ENCODE measurements at regions of chr4 and their contacts with region 1.

Region 1: DNA sequence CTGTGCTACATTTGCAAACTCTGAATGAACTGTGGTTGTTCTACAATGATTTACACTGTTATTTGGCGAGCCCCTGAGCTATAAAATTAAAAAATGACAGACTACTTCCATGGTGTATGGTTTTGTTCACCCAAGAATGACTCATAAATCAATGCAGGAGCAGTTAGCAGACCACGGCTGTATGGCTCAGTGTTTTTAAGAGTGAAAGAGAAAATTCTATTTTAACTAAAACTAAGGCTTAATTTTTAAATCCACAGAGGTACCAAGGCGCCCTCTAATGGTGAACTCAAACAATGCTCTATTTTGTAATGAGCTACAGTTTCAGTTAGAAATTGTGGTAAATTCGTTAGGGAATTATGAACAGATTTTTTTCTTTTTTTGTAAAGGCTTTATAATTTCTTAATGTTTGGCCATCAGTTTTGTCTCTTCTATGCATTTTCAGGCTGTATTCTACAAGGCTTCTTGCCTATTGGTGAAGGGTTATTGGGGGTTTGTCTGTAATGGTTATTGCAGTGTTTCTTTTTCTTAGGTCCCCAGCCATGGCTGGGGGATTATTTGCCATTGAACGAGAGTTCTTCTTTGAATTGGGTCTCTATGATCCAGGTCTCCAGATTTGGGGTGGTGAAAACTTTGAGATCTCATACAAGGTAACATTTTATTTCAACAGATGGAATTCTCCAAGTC is 32.5 kb downstream of the HMGB2 start:
- DNase-seq: no peak
- ATAC-seq: peak; percentile 58
- H3K4me3 ChIP-seq: no peak overlapping the region
- H3K27ac ChIP-seq: no peak overlapping the region
- H3K4me1 ChIP-seq: no peaks in the 10 kb centered on the region
- H3K27me3 ChIP-seq: no peaks in the 10 kb centered on the region
- CTCF ChIP-seq: peak; percentile 58 to 70 (median 60)
- EP300 ChIP-seq: no peak
- POLR2A ChIP-seq: no peak
- RAD21 ChIP-seq: peak; percentile 75

Region 2: DNA sequence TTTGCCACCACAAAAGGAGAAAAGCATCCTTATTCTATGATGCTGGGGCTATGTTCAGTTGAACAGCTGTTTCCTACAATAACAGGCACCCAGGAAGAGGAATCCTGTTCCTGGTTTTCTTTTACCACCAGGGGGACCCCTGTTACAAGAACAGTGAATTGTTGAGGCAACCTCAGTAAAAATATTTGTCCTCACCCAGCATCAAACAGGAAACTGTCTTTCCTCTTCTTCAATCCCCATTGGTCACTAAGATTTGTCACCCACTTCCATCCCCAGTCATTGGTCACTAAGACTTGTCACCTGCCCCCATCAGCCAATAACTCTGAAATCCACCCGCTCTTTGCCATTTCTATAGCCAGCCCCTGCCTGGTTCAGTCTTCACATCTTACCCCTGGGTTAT is 276.5 kb before region 1 on chr4:
- CTCF ChIA-PET with region 1: interaction called, 48 read pairs
- POLR2A ChIA-PET with region 1: no interaction called
- RAD21 ChIA-PET with region 1: interaction called, 31 read pairs
- SMC1A ChIA-PET with region 1: interaction called, 27 read pairs
- in situ Hi-C with region 1: no loop called
- intact Hi-C with region 1: no loop called
- DNase-seq: peak; percentile 16
- ATAC-seq: peak; percentile 95
- H3K4me3 ChIP-seq: no peak overlapping the region
- H3K27ac ChIP-seq: no peak overlapping the region
- H3K4me1 ChIP-seq: no peaks in the 10 kb centered on the region
- H3K27me3 ChIP-seq: no peaks in the 10 kb centered on the region; a peak in 1 of 4 replicates
- CTCF ChIP-seq: peak; percentile 54 to 63 (median 58); a peak in 5 of 6 replicates
- EP300 ChIP-seq: no peak
- POLR2A ChIP-seq: no peak
- RAD21 ChIP-seq: peak; percentile 91

Region 3: DNA sequence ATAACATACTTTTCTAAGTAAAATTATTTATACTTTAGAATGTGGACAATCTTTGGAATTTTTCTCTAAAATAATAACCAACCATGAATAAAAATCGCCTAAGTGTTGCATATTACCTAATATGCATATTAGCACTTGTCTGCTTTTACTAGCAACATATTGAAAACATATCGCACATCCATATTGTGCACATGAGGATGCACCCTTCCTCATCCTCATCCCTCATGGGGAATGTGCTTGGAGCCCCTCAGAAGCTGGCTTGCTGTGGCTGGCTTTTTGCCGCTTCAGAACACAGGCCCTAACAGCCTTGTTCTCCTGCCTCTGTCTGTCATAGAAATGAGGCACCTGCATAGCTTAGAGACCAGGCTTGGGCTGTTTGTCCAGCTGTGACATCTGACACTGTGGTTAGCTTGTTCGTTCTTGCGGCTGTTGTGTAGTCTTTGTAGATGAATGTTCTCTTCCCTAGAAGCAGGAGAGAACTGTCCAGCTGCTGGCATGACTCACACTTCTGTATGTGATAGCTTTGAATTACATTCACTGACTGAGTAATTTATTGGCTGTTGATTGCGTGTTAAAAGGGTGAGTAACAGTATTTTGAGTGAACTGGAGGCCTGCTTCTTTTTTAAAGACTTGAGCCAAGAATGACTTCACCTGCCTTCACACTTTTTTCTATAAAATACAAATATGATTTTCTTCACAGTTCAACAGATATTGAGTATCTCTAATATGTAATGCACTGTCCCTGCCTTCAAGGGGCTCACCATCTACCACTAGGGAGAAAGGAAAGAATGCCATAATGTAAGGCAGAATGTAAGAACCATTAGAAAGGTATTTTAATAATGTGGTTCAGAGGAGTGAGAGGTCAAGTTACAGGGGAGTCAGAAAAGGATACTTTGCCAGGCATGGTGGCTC is 49.4 kb before region 1 on chr4:
- CTCF ChIA-PET with region 1: interaction called, 33 read pairs
- POLR2A ChIA-PET with region 1: interaction called, 3 read pairs
- RAD21 ChIA-PET with region 1: interaction called, 22 read pairs
- SMC1A ChIA-PET with region 1: interaction called, 17 read pairs
- in situ Hi-C with region 1: no loop called
- intact Hi-C with region 1: no loop called
- DNase-seq: peak; percentile 68
- ATAC-seq: peak; percentile 51
- H3K4me3 ChIP-seq: no peak overlapping the region
- H3K27ac ChIP-seq: peak overlapping the region; percentile 61
- H3K4me1 ChIP-seq: peaks cover 26% of the 10 kb centered on the region
- H3K27me3 ChIP-seq: no peaks in the 10 kb centered on the region
- CTCF ChIP-seq: no peak
- EP300 ChIP-seq: no peak; a peak in 1 of 4 replicates
- POLR2A ChIP-seq: no peak
- RAD21 ChIP-seq: peak; percentile 14; the same call in 1 of the 2 replicates

Region 4: DNA sequence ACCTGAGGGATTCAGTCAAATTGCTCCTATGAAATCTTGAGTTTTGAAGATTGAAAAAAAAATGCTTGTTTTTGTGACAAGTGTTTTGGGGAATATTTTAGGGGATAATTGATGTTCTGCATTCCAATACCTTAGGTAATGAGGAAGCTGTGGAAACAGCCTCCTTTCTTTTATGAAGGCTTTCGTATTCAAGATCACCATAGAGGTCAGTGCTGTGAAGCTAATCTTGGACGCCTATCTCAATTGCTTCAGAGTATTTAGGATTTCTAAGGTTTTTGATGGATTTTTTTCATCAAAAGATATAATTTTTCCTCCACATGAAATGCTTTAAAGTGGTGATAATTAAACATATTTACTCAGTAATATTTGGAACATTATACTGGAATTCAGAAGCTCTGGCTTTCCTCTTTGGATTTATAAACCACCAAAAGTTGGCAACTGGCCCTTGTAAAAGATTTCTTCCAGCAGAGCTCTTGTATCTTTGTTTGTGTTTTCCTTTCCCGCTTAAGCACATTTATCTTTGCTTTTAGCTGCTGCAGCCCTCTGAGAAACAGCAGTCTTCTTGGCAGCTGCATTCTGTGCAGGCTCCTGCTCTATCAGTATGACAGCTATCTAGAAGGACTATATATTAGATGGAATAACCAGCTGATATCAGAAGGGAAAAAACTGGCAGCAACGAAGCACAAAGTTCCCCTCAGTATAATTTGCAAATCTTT is 31.2 kb before region 1 on chr4:
- CTCF ChIA-PET with region 1: interaction called, 66 read pairs
- POLR2A ChIA-PET with region 1: no interaction called
- RAD21 ChIA-PET with region 1: interaction called, 9 read pairs
- SMC1A ChIA-PET with region 1: interaction called, 6 read pairs
- in situ Hi-C with region 1: no loop called
- intact Hi-C with region 1: no loop called
- DNase-seq: no peak
- ATAC-seq: no peak
- H3K4me3 ChIP-seq: no peak overlapping the region
- H3K27ac ChIP-seq: no peak overlapping the region
- H3K4me1 ChIP-seq: no peaks in the 10 kb centered on the region
- H3K27me3 ChIP-seq: no peaks in the 10 kb centered on the region
- CTCF ChIP-seq: no peak
- EP300 ChIP-seq: no peak
- POLR2A ChIP-seq: no peak
- RAD21 ChIP-seq: no peak

Region 5: GRCh38 chr4:173318648-173319211 is 17.1 kb after region 1 on chr4:
- CTCF ChIA-PET with region 1: interaction called, 53 read pairs
- POLR2A ChIA-PET with region 1: no interaction called
- RAD21 ChIA-PET with region 1: interaction called, 6 read pairs
- SMC1A ChIA-PET with region 1: interaction called, 13 read pairs
- in situ Hi-C with region 1: no loop called
- intact Hi-C with region 1: no loop called
- DNase-seq: no peak
- ATAC-seq: peak; percentile 51; the same call in 2 of the 3 replicates
- H3K4me3 ChIP-seq: no peak overlapping the region
- H3K27ac ChIP-seq: no peak overlapping the region
- H3K4me1 ChIP-seq: no peaks in the 10 kb centered on the region; the same call in 1 of the 2 replicates
- H3K27me3 ChIP-seq: no peaks in the 10 kb centered on the region
- CTCF ChIP-seq: peak in 1 of 3 experiments; percentile 14; a peak in 3 of 6 replicates
- EP300 ChIP-seq: no peak
- POLR2A ChIP-seq: no peak
- RAD21 ChIP-seq: peak; percentile 45

Region 6: DNA sequence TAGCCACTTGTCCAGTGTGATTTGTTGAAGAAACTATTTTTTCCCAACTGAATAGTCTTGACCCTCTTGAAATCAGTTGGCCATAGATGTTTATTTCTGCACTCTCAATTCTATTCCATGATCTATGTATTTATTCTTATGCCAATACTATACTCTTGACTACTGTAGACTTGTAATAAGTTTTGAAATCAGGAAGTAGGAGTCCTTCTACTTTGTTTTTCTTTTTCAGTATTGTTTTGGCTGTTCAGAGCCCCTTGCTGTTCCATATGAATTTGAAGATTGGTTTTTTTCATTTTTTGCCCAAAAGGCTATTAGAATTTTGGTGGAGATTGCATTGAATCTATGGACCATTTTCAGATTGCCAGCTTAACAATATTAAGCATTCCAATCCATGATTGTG is 79.3 kb after region 1 on chr4:
- CTCF ChIA-PET with region 1: interaction called, 10 read pairs
- POLR2A ChIA-PET with region 1: no interaction called
- RAD21 ChIA-PET with region 1: interaction called, 6 read pairs
- SMC1A ChIA-PET with region 1: interaction called, 3 read pairs
- in situ Hi-C with region 1: no loop called
- intact Hi-C with region 1: no loop called
- DNase-seq: no peak
- ATAC-seq: peak; percentile 57
- H3K4me3 ChIP-seq: no peak overlapping the region
- H3K27ac ChIP-seq: no peak overlapping the region
- H3K4me1 ChIP-seq: no peaks in the 10 kb centered on the region
- H3K27me3 ChIP-seq: no peaks in the 10 kb centered on the region
- CTCF ChIP-seq: no peak
- EP300 ChIP-seq: no peak
- POLR2A ChIP-seq: no peak
- RAD21 ChIP-seq: no peak

Region 7: GRCh38 chr4:173464481-173464880 is 162.8 kb after region 1 on chr4:
- CTCF ChIA-PET with region 1: no interaction called
- POLR2A ChIA-PET with region 1: no interaction called
- RAD21 ChIA-PET with region 1: no interaction called
- SMC1A ChIA-PET with region 1: no interaction called
- in situ Hi-C with region 1: no loop called
- intact Hi-C with region 1: no loop called
- DNase-seq: no peak
- ATAC-seq: no peak
- H3K4me3 ChIP-seq: no peak overlapping the region
- H3K27ac ChIP-seq: no peak overlapping the region
- H3K4me1 ChIP-seq: no peaks in the 10 kb centered on the region
- H3K27me3 ChIP-seq: no peaks in the 10 kb centered on the region
- CTCF ChIP-seq: no peak
- EP300 ChIP-seq: no peak
- POLR2A ChIP-seq: no peak
- RAD21 ChIP-seq: no peak

Measured in GM12878 (cell line).